Activated naive CD8-positive, alpha-beta T cell treated with anti-CD3 and anti-CD28 coated beads, Interleukin-2, amount 10 ng/mL, durations not matched to agents 7 days and 5 days (primary cell): ENCODE measurements at regions of chr17 and their contacts with region 1.

Region 1: GRCh38 chr17:47895856-47896671 is at the start of gene SP2:
- DNase-seq: peak; percentile 98
- ATAC-seq: peak; percentile 93
- H3K4me3 Mint-ChIP-seq: peak within 1 kb of the TSS; percentile 100
- H3K27ac Mint-ChIP-seq: peak within 1 kb of the TSS; percentile 100
- H3K4me1 Mint-ChIP-seq: peaks cover 33% of the 10 kb centered on the region
- H3K27me3 Mint-ChIP-seq: no peaks in the 10 kb centered on the region
- total RNA-seq, gene SP2: 28.1 to 28.2 TPM

Region 2: DNA sequence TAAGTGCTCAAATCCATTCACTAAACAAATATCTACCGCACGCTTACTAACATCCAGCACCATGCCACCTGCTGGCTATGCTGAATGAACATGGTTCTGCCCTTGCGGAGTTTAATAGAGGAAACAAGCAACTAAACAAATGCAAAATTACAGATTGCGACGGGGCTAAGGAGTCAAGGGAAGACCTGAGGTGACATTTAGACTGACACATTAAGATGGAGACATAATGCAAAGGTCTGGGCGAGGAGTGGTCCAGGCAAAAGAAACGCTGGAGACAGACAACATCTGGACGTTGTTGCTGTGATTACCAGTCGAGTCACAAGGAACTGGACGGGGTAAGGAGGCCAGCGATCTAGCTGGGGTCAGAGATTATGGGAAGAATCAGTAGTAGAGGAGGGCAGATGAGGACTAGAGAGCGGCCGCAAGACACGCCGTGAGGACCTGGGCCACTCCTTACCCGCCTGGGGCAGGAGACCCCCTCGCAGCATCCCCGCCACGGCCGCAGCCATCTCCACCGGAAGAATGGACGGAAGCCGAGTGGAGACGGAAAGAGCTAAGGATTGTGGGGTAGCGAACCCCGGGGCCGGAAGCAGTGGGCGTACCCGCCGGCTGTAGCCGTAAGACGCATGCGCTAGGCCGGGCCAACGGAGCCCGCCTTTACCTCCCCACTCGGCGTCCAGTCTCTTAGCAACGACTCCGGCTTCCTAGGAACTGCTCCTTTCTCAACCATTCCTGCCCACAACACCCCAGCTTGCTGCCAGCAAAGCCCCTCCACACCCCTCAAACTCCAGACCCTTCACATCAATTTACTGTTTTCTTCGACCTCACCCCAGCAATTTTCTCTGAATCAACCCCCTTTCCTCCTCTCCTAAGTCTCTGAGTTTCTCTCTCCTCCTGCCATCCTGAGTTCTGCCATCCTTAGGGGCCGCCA is 64.8 kb before region 1 on chr17 and contains the starts of genes LRRC46 and MRPL10:
- POLR2A ChIA-PET with region 1: interaction called, 14 read pairs
- DNase-seq: peak; percentile 93
- ATAC-seq: peak; percentile 94
- H3K4me3 Mint-ChIP-seq: peak within 1 kb of the TSS; percentile 97
- H3K27ac Mint-ChIP-seq: peak within 1 kb of the TSS; percentile 95
- H3K4me1 Mint-ChIP-seq: peaks cover 38% of the 10 kb centered on the region
- H3K27me3 Mint-ChIP-seq: no peaks in the 10 kb centered on the region
- total RNA-seq, gene LRRC46: 0.42 to 0.43 TPM
- total RNA-seq, gene MRPL10: 49.7 to 50.3 TPM

Region 3: DNA sequence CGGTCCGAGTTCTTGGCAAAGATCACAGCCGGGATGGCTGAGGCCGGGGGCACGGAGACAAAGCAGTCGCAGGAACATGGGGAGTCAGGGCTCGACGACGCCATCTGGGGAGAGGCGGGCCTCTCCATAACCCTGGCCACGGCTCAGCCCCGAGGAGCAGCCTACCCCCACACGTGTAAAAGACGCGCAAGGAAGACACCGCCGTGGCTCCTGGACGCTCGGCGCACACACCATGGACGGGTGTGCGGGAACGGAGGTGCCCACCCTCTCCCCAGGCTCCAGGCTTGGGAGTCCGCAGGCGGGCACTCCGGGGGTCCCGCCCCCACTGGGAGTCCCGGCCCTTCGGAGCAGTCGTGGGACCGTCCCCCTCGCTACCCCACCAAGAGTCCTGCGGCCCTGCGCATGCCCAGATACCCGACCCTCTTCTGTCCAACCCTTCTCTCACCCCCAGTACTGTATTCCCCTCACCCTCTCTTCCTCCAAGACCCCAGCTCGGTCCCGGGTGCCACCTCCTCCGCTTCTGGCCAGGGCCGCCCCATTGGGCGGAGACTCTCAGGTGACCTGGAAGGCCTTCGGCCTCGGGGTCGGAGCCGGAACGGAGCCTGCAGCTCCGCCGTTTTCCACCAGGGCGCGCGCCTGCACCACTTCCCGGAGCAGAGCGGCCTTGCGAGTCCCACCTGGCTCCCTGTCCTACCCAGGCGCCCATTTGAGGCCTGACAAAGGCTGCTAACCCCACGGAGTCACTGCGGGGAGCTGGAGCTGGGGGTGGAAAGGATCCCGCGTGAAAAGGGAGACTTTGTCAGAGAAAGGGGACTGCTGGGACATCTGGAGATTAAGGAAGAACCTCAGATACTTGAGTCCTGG is 55.1 kb before region 1 on chr17 and contains the start of gene SCRN2:
- POLR2A ChIA-PET with region 1: interaction called, 31 read pairs
- DNase-seq: peak; percentile 96
- ATAC-seq: peak; percentile 84
- H3K4me3 Mint-ChIP-seq: peak within 1 kb of the TSS; percentile 100
- H3K27ac Mint-ChIP-seq: peak within 1 kb of the TSS; percentile 95
- H3K4me1 Mint-ChIP-seq: peaks cover 25% of the 10 kb centered on the region
- H3K27me3 Mint-ChIP-seq: peaks cover 11% of the 10 kb centered on the region
- total RNA-seq, gene SCRN2: 38.0 to 39.6 TPM

Region 4: DNA sequence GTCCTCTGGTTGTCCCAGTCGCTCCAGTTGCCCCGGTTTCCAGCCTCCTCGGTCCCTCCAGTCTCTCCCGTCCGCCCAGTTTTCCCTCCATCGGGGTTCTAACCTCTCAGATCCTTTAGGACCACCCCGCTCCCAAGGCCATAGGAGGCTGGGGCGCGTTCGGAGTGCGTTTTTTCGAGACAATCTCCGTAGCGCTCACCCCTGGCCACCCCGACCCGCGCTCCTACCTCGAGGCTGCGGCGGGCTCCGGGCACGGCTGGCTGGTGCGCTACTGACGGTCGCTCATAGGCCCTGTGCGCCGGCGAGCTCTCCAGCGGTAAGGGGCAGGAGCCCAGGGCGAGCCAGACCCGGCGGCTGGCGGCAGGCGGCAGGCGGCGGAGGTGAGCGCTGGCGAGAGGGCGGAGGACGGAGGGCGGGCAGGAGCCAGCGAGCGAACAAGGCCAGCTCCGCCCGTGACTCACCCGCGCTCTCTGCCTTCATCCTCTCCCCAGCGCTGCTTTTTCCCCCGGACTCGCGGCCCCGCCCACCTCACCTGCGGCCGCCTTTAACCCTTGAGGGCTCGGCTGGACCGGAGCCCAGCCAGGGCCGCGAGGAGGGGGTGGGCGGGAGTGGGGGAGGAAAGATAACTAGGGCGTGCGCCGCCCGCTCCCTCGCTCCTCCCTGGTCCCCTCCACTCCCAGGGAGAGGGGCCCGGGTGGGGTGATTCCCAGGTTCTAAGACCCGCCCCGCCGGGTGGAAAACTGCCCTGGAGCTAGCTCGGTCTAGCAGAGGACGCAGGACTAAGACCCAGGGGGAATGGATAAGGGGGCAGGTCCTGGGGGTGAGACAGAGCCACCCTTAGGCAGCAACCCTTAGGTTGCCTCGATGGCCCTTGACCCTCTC is 45.1 kb before region 1 on chr17 and contains the start of gene SP6:
- POLR2A ChIA-PET with region 1: interaction called, 10 read pairs
- DNase-seq: peak; percentile 72
- ATAC-seq: peak; percentile 87
- H3K4me3 Mint-ChIP-seq: peak within 1 kb of the TSS; percentile 39
- H3K27ac Mint-ChIP-seq: no peak within 1 kb of the TSS
- H3K4me1 Mint-ChIP-seq: peaks cover 19% of the 10 kb centered on the region
- H3K27me3 Mint-ChIP-seq: peaks cover 91% of the 10 kb centered on the region
- total RNA-seq, gene SP6: 0.09 to 0.22 TPM

Region 5: GRCh38 chr17:47941236-47941994 is 45.4 kb after region 1 on chr17 and contains the start of gene PNPO:
- POLR2A ChIA-PET with region 1: interaction called, 24 read pairs
- DNase-seq: peak; percentile 87
- ATAC-seq: peak; percentile 98
- H3K4me3 Mint-ChIP-seq: peak within 1 kb of the TSS; percentile 97
- H3K27ac Mint-ChIP-seq: peak within 1 kb of the TSS; percentile 78
- H3K4me1 Mint-ChIP-seq: peaks cover 37% of the 10 kb centered on the region
- H3K27me3 Mint-ChIP-seq: no peaks in the 10 kb centered on the region
- total RNA-seq, gene PNPO: 32.5 to 32.8 TPM

Region 6: GRCh38 chr17:47949136-47949759 is 53.2 kb after region 1 on chr17:
- POLR2A ChIA-PET with region 1: interaction called, 14 read pairs
- DNase-seq: peak; percentile 90
- ATAC-seq: peak; percentile 53
- H3K4me3 Mint-ChIP-seq: peak overlapping the region; percentile 70
- H3K27ac Mint-ChIP-seq: peak overlapping the region; percentile 80
- H3K4me1 Mint-ChIP-seq: peaks cover 35% of the 10 kb centered on the region
- H3K27me3 Mint-ChIP-seq: no peaks in the 10 kb centered on the region

Region 7: GRCh38 chr17:47970704-47971463 is 74.8 kb after region 1 on chr17 and contains the start of gene CDK5RAP3:
- POLR2A ChIA-PET with region 1: interaction called, 32 read pairs
- DNase-seq: peak; percentile 100
- ATAC-seq: peak; percentile 98
- H3K4me3 Mint-ChIP-seq: peak within 1 kb of the TSS; percentile 97
- H3K27ac Mint-ChIP-seq: peak within 1 kb of the TSS; percentile 64
- H3K4me1 Mint-ChIP-seq: peaks cover 28% of the 10 kb centered on the region
- H3K27me3 Mint-ChIP-seq: no peaks in the 10 kb centered on the region
- total RNA-seq, gene CDK5RAP3: 286 to 287 TPM